SK-N-SH (cell line): ENCODE measurements at regions of chr20 and their contacts with region 1.

Region 1: GRCh38 chr20:45044084-45044573 is 56.8 kb downstream of the KCNS1 start:
- DNase-seq: peak; percentile 36
- H3K4me3 ChIP-seq: no peak overlapping the region; a peak in 1 of 4 replicates
- H3K27ac ChIP-seq: peak overlapping the region in 1 of 2 experiments; percentile 63; a peak in 2 of 4 replicates
- H3K4me1 ChIP-seq: peaks cover 0 to 29% of the 10 kb centered on the region in 2 experiments; a peak in 2 of 4 replicates
- H3K27me3 ChIP-seq: no peaks in the 10 kb centered on the region
- CTCF ChIP-seq: peak; percentile 96
- EP300 ChIP-seq: no peak
- RAD21 ChIP-seq: peak; percentile 91

Region 2: DNA sequence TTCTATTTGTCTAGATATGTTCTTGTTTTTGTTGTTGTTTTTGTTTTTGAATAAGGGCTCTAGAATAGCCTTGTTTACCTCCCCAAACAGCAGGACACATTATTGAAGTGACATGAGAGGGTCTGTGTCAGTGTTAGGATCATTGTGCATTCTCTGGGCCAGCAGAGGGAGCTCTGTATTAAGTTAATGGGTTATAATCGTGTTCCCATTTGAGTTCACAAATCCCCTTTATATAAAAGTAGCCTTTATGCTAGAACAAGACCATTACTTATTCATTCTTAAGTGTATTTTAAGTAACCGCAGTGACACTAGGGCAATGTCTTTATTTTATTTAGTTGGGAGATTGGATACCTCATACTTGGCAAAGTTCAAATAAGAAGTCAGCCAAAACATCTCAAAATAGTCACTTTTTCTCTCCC is 33.0 kb before region 1 on chr20:
- CTCF ChIA-PET with region 1: interaction called, 18 read pairs
- POLR2A ChIA-PET with region 1: no interaction called
- DNase-seq: peak; percentile 57
- H3K4me3 ChIP-seq: peak overlapping the region in 1 of 2 experiments; percentile 33; a peak in 1 of 4 replicates
- H3K27ac ChIP-seq: peak overlapping the region; percentile 51 to 96; a peak in 3 of 4 replicates
- H3K4me1 ChIP-seq: peaks cover 15 to 31% of the 10 kb centered on the region in 2 experiments
- H3K27me3 ChIP-seq: no peaks in the 10 kb centered on the region
- CTCF ChIP-seq: peak; percentile 96
- EP300 ChIP-seq: no peak
- RAD21 ChIP-seq: peak; percentile 82

Region 3: GRCh38 chr20:45028424-45029136 is 15.5 kb before region 1 on chr20:
- CTCF ChIA-PET with region 1: interaction called, 25 read pairs
- POLR2A ChIA-PET with region 1: no interaction called
- DNase-seq: no peak
- H3K4me3 ChIP-seq: no peak overlapping the region
- H3K27ac ChIP-seq: no peak overlapping the region
- H3K4me1 ChIP-seq: no peaks in the 10 kb centered on the region
- H3K27me3 ChIP-seq: no peaks in the 10 kb centered on the region
- CTCF ChIP-seq: no peak
- EP300 ChIP-seq: no peak
- RAD21 ChIP-seq: no peak

Region 4: DNA sequence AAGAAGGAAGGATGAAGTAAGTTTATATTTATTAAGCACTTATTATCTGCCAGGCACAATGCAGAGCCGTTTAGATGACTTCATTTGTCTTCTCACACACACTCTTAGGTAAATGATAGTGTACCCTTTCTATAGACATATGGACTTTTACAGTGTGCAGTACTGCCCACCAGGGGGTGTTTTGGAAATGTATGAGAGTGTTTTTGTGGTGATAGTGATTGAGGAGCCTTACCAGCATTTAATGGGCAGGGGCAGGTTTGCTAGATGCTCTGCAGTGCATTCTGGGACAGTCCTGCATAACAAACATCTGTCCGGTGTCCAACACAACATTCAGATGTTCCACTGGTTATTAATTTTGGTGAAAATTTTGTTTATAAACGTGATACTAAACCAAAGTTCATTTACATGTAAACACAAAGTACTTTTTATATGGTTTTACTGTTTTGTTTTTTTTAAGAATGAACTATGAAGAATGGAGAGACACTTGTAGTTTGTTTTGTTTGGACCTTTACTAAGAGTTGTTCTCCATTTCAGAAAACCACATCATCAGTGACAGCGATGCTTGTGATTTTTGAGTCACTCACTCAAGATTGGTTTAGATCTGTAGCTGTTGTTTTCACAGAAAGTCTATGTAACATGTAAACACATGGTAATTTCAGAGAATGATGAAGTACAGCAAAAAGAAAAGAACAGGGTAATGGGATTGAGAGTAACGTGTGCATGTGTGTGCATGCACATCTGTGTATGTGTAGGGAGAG is 36.9 kb after region 1 on chr20:
- CTCF ChIA-PET with region 1: interaction called, 11 read pairs
- POLR2A ChIA-PET with region 1: no interaction called
- DNase-seq: no peak
- H3K4me3 ChIP-seq: no peak overlapping the region
- H3K27ac ChIP-seq: no peak overlapping the region
- H3K4me1 ChIP-seq: no peaks in the 10 kb centered on the region
- H3K27me3 ChIP-seq: no peaks in the 10 kb centered on the region
- CTCF ChIP-seq: peak; percentile 59
- EP300 ChIP-seq: no peak
- RAD21 ChIP-seq: no peak

Region 5: GRCh38 chr20:45104786-45105185 is 60.7 kb after region 1 on chr20:
- CTCF ChIA-PET with region 1: interaction called, 53 read pairs
- POLR2A ChIA-PET with region 1: interaction called, 3 read pairs
- DNase-seq: no peak
- H3K4me3 ChIP-seq: no peak overlapping the region
- H3K27ac ChIP-seq: peak overlapping the region; percentile 11 to 74; a peak in 3 of 4 replicates
- H3K4me1 ChIP-seq: no peaks in the 10 kb centered on the region
- H3K27me3 ChIP-seq: no peaks in the 10 kb centered on the region
- CTCF ChIP-seq: no peak
- EP300 ChIP-seq: peak in 1 of 2 experiments; percentile 75; a peak in 2 of 4 replicates
- RAD21 ChIP-seq: no peak

Region 6: GRCh38 chr20:45128071-45128470 is 83.9 kb after region 1 on chr20:
- CTCF ChIA-PET with region 1: no interaction called
- POLR2A ChIA-PET with region 1: no interaction called
- DNase-seq: no peak
- H3K4me3 ChIP-seq: no peak overlapping the region
- H3K27ac ChIP-seq: no peak overlapping the region
- H3K4me1 ChIP-seq: no peaks in the 10 kb centered on the region
- H3K27me3 ChIP-seq: peaks cover 13% of the 10 kb centered on the region; the same call in 1 of the 2 replicates
- CTCF ChIP-seq: no peak
- EP300 ChIP-seq: no peak
- RAD21 ChIP-seq: no peak

Region 7: DNA sequence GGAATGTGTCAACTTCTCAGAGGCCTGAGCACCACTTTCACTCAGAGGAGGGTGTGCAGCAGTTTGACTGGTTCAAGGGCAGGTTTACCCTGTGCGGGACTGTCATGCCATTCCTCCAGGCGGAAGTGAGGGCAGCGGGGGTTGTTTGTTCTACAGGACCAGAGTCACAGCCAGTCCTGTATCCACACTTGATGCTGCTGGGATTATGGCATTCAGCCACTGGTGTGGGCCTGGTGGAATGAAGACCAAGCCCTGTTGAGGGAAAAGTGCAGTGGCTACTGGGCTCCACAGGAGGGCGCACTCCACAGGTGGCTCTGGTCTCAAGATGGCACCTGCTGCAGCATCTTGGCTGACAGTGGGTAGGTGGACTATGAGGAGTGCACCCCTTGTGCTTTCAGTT is 191.9 kb after region 1 on chr20:
- CTCF ChIA-PET with region 1: no interaction called
- POLR2A ChIA-PET with region 1: no interaction called
- DNase-seq: no peak
- H3K4me3 ChIP-seq: no peak overlapping the region
- H3K27ac ChIP-seq: no peak overlapping the region
- H3K4me1 ChIP-seq: no peaks in the 10 kb centered on the region
- H3K27me3 ChIP-seq: peaks cover 3% of the 10 kb centered on the region; the same call in 1 of the 2 replicates
- CTCF ChIP-seq: peak; percentile 51; the same call in 1 of the 2 replicates
- EP300 ChIP-seq: no peak
- RAD21 ChIP-seq: no peak

Region 8: DNA sequence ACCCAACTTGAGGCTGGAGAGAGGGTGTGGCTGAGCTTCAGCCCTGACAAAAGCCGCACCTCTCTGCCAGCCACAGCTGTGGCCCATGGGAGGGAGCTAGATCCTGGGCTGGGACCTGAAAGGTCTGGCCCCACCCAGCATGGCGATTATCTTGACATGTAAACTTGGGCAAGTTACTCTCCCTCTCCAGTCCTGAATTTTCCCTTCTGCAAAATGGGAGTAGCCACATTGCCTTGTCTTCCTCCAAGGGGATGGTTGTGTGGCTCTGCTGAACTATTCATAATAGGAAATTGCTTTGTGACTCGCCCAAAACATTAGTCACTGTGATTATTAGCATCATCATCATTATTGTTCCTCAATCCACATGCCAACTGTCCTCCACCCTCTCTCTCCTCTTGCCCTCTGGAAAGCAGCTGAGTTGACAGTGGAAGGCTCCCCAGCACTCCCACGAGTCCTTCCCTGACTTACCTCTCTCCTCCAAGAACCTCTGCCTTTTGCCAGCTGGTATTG is 239.5 kb after region 1 on chr20:
- CTCF ChIA-PET with region 1: interaction called, 15 read pairs
- POLR2A ChIA-PET with region 1: no interaction called
- DNase-seq: no peak
- H3K4me3 ChIP-seq: no peak overlapping the region
- H3K27ac ChIP-seq: no peak overlapping the region
- H3K4me1 ChIP-seq: no peaks in the 10 kb centered on the region
- H3K27me3 ChIP-seq: peaks cover 31% of the 10 kb centered on the region
- CTCF ChIP-seq: no peak
- EP300 ChIP-seq: no peak
- RAD21 ChIP-seq: no peak